B cell (primary cell): ENCODE measurements at regions of chr2 and their contacts with region 1.

Region 1: DNA sequence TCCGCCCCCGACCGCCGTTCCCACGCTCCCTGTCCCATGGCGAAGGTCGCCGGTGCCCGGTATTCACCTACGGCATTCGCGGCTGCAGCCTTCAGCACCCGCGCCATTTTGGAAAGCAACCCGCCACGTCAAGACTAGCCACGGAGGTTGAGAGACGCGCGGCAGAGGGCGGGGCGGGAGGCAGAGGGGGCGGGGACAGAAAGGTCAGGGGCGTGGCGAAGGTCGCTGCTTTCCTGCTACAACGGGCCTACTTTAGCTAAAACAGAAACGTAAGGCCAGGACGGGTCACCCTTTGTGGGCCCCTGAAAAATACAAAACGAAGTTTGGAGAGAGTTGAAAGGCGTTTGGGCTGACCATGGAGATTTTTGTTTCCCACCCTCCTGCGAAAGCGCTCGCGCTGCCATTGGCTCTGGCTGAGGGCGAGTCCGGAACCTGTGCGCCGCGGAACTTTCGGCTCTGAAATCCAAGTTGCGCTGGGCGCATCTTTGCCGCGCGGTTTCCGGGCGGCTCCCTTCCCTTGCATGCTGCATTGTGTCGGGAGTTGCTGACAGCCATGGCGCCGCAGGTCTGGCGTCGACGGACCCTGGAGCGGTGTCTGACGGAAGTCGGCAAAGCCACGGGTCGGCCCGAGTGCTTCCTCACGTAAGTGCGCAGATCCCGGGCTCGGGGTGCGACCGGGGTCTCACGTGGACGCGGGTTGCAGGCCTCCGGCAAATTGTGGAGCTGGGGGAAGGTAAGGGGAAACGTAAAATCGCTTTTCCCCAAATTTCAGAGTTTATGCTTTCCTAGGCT is at the starts of genes MCEE and MPHOSPH10:
- DNase-seq: peak; percentile 92
- ATAC-seq: peak; percentile 93
- H3K4me3 ChIP-seq: peak within 1 kb of the TSS; percentile 82 to 97 (median 90)
- H3K4me3 Mint-ChIP-seq: no peak within 1 kb of the TSS
- H3K27ac ChIP-seq: peak within 1 kb of the TSS; percentile 73 to 81
- H3K27ac Mint-ChIP-seq: no peak within 1 kb of the TSS
- H3K4me1 ChIP-seq: peaks cover 20 to 25% of the 10 kb centered on the region in 2 donors
- H3K4me1 Mint-ChIP-seq: peaks cover 19% of the 10 kb centered on the region
- H3K27me3 ChIP-seq: no peaks in the 10 kb centered on the region
- H3K27me3 Mint-ChIP-seq: no peaks in the 10 kb centered on the region
- CTCF ChIP-seq: no peak
- total RNA-seq, gene MCEE: 17.6 and 21.7 TPM in 2 replicates
- total RNA-seq, gene MPHOSPH10: 45.8 and 51.8 TPM in 2 replicates

Region 2: DNA sequence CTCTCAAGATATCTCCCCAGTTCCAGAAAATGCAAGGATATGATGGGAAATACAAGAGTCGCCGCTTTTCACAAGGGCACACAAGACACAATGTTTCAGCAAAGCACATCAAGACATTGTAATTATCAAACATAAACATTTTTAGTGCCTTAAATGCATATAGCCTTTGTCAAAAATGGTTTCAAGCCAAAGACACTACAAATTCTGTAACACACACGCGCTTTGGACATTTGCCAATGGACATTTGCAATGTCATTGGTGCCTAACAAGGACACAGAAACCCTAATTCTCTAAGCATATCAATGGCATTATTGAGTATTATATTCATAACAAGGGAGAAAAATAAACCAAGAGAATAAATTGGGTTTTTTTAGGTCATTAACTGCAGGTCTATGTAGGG is 378.4 kb before region 1 on chr2:
- CTCF ChIA-PET with region 1: no interaction called
- POLR2A ChIA-PET with region 1: no interaction called
- intact Hi-C with region 1: no loop called
- DNase-seq: no peak
- ATAC-seq: no peak
- H3K4me3 ChIP-seq: no peak overlapping the region
- H3K4me3 Mint-ChIP-seq: no peak overlapping the region
- H3K27ac ChIP-seq: no peak overlapping the region
- H3K27ac Mint-ChIP-seq: no peak overlapping the region
- H3K4me1 ChIP-seq: no peaks in the 10 kb centered on the region
- H3K4me1 Mint-ChIP-seq: peaks cover 15% of the 10 kb centered on the region
- H3K27me3 ChIP-seq: peaks cover 0 to 5% (median 0%) of the 10 kb centered on the region in 4 experiments
- H3K27me3 Mint-ChIP-seq: peaks cover 5% of the 10 kb centered on the region
- CTCF ChIP-seq: no peak

Region 3: GRCh38 chr2:71049365-71050360 is 80.6 kb before region 1 on chr2:
- CTCF ChIA-PET with region 1: interaction called, 5 read pairs
- POLR2A ChIA-PET with region 1: interaction called, 3 read pairs
- intact Hi-C with region 1: loop called (anchors 1 kb)
- DNase-seq: peak; percentile 67
- ATAC-seq: peak; percentile 47
- H3K4me3 ChIP-seq: no peak overlapping the region
- H3K4me3 Mint-ChIP-seq: no peak overlapping the region
- H3K27ac ChIP-seq: no peak overlapping the region
- H3K27ac Mint-ChIP-seq: no peak overlapping the region
- H3K4me1 ChIP-seq: peaks cover 0 to 3% of the 10 kb centered on the region in 2 donors
- H3K4me1 Mint-ChIP-seq: peaks cover 3% of the 10 kb centered on the region
- H3K27me3 ChIP-seq: peaks cover 0 to 3% (median 0%) of the 10 kb centered on the region in 4 experiments
- H3K27me3 Mint-ChIP-seq: peaks cover 6% of the 10 kb centered on the region
- CTCF ChIP-seq: peak; percentile 38

Region 4: DNA sequence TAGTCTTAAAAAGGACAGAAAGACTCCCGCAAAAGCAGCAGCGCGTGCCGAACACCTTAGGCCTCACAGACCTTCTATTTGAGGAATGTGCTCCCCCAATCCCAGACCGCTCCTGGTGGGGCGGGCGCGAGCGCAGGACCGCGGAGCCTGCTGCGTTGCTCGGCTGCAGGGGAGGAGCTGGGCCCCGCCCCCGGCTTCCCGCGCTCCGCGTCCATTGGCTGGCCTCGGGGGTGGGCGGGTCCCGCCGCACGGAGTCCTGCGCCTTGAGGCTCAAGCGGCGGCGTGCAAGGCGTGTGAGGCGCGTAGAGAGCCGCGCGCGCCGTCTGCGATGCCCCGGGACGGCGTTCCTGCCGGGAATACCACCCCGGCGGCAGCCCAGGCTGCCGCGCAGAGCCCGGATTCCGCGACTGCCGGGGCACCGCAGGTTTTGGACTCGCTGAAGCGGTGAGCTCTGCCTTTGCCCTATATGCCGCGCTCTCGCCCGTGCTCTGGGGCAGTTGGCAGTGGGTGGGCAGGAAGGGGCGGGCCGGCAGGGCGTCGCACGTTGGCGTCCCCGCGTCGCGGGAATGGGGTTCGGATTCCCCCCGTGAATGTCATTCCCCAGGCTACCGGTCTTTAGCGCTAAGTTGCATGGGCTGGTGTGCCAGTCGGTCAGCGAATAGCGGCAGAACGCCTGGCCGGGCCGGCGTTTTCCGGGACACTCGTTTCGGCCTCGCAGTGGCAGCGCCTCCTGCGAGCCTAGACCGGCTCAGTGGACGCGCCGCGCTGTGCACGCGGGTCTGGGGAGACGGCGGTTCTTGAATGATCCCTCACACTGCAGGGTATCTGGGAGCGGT is 146.2 kb after region 1 on chr2:
- CTCF ChIA-PET with region 1: no interaction called
- POLR2A ChIA-PET with region 1: interaction called, 4 read pairs
- intact Hi-C with region 1: loop called (anchors 10 kb)
- DNase-seq: peak; percentile 90
- ATAC-seq: peak; percentile 99
- H3K4me3 ChIP-seq: peak overlapping the region; percentile 23 to 77 (median 58)
- H3K4me3 Mint-ChIP-seq: peak overlapping the region; percentile 87
- H3K27ac ChIP-seq: no peak overlapping the region
- H3K27ac Mint-ChIP-seq: peak overlapping the region; percentile 24
- H3K4me1 ChIP-seq: peaks cover 18 to 19% of the 10 kb centered on the region in 2 donors
- H3K4me1 Mint-ChIP-seq: peaks cover 22% of the 10 kb centered on the region
- H3K27me3 ChIP-seq: peaks cover 0 to 19% (median 9%) of the 10 kb centered on the region in 4 experiments
- H3K27me3 Mint-ChIP-seq: peaks cover 54% of the 10 kb centered on the region
- CTCF ChIP-seq: no peak